ENCODE measurements at regions of chr2 and their contacts with region 1.

Region 1: DNA sequence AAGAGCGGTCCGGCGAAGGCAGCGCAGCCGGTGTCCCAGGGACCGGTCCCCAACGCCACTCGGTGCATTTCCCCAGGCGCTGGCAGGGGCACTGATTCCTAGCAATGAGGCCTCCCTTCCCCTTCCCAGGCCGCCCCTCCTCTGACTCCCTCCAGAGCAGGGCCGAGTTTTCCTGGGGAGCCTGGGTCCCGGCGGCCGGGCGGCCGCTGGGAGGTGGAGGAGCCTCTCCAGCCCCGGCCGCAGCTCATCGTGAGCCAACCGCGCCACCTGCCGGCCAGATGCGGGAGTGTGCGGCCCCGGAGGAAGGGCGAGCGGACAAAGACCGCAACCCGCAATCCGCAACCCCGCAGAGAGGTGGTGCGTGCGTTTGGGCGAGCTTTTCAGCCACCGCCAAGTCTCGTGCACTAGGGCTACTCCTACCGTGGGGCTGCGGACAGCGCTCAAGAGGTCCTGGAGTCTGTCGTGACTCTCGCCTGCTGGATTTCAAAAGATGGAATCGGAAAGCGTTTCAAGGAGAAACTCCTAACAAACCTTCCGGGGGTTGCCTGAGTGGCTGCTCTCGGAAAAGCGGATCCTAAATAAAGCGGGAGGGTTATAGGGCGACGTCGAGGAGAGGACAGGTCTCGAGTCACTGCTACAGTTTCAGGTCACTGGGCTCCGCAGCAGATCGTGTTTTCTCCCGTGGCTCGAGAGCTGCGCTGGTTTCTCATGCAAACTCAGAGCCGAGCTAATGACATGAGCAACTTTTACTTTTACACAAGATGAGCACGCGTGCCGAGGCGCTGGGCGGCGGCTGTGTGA is 1.5 kb upstream of the EPHA4 start:
- DNase-seq: peak; percentile 86
- ATAC-seq: peak; percentile 78 to 81

Region 2: GRCh38 chr2:219736209-219736608 is 1837.4 kb before region 1 on chr2:
- intact Hi-C with region 1: loop called in 1 of 2 experiments (anchors 5 kb)
- DNase-seq: no peak
- ATAC-seq: peak; percentile 71 to 80

Region 3: GRCh38 chr2:220687231-220687843 is 886.3 kb before region 1 on chr2:
- intact Hi-C with region 1: loop called (anchors 2 to 10 kb)
- DNase-seq: peak; percentile 67
- ATAC-seq: peak; percentile 90 to 91

Region 4: DNA sequence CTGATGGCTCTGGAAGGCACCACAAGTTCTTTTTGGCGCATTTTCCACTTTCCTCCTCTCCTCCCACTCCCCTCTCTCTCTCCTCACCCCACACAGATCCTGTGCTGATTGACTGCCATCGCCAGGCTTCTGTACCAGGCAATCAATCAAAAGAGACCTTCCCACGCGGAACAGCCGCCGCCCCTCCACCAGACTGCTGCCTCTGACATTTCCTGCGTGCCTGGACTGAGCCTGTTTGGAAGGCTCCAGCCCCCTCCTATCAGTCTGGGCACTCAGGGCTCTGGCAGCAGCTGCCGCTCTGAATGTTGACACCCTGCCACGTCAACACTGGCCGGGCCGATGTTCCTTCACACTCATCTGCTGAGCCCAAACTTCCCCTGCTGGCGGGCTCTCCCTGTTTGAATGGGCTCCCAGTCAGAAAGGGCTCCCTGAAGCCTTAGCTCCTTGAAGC is 469.2 kb before region 1 on chr2:
- intact Hi-C with region 1: loop called in 1 of 2 experiments (anchors 2 kb)
- DNase-seq: peak; percentile 92
- ATAC-seq: peak; percentile 98 to 99

Region 5: DNA sequence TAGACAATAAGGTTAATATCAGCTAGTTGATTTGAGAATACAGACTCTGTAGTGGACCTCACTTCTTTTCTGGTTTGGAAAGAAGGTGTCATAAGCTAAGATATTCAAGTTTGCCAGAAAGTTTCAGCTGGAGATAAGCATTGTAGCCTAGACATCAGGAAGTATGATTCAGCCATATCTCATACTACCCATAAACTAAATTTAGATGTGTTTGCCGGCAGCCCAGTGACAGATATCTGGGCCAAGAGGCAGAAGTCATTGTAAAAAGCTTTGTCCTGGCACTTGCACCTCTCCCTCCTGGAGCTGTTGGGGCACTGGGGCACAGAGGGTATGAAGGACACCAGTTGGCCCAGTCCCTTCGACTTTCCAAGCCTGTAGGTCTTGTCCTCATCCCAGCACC is 129.5 kb before region 1 on chr2:
- intact Hi-C with region 1: loop called in 1 of 2 experiments (anchors 5 kb)
- DNase-seq: peak; percentile 47
- ATAC-seq: peak; percentile 76 to 86

Region 6: GRCh38 chr2:221676566-221677172 is 103.0 kb after region 1 on chr2:
- intact Hi-C with region 1: no loop called
- DNase-seq: no peak
- ATAC-seq: no peak

Measured in left cardiac atrium (tissue), 4 donors.